Prostate gland (tissue), 2 donors: ENCODE measurements at regions of chr15 and their contacts with region 1.

Region 1: GRCh38 chr15:79923515-79924395 is 26.9 kb upstream of the MTHFS start:
- DNase-seq: peak; percentile 96
- H3K4me3 ChIP-seq: peak overlapping the region; percentile 66 to 84
- H3K27ac ChIP-seq: peak overlapping the region; percentile 91 to 96
- H3K4me1 ChIP-seq: no peaks in the 10 kb centered on the region
- H3K27me3 ChIP-seq: no peaks in the 10 kb centered on the region
- CTCF ChIP-seq: peak in 2 of 4 experiments; percentile 7 to 11
- POLR2A ChIP-seq: peak; percentile 80

Region 2: GRCh38 chr15:80152180-80152845 is 228.6 kb after region 1 on chr15:
- intact Hi-C with region 1: loop called (anchors 2 kb)
- DNase-seq: peak; percentile 93
- H3K4me3 ChIP-seq: peak overlapping the region; percentile 61 to 63
- H3K27ac ChIP-seq: peak overlapping the region; percentile 86 to 88
- H3K4me1 ChIP-seq: peaks cover 8% of the 10 kb centered on the region
- H3K27me3 ChIP-seq: no peaks in the 10 kb centered on the region
- CTCF ChIP-seq: no peak
- POLR2A ChIP-seq: no peak